ENCODE measurements at regions of chr1 and their contacts with region 1.

Region 1: DNA sequence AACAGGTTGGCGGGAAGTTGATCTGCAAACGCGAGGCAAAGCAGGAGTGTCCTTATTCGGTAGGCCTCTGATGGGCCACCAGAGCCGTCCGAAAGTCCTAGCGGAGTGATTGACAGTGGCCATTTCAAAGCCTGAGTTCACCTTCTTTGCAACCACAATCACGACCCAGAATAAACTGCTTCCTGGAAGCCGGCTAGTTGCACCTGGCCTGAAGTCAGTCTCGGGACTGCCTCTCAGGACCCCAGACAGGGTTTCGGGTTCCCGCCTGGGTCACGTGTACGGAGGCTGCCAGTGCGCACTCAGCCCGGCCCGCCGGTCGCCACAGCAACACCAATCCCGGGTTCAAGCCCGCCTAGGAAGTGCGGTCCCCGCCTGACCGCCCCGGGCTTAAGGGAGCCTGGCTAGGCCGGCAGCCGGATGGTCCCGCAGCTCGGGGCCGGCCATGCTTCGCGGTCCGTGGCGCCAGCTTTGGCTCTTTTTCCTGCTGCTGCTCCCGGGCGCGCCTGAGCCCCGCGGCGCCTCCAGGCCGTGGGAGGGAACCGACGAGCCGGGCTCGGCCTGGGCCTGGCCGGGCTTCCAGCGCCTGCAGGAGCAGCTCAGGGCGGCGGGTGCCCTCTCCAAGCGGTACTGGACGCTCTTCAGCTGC is at the start of gene TOR3A:
- DNase-seq: peak; percentile 87
- ATAC-seq: peak; percentile 82
- H3K4me3 Mint-ChIP-seq: peak within 1 kb of the TSS; percentile 97
- H3K27ac Mint-ChIP-seq: peak within 1 kb of the TSS; percentile 94
- H3K4me1 Mint-ChIP-seq: peaks cover 24% of the 10 kb centered on the region
- H3K27me3 Mint-ChIP-seq: no peaks in the 10 kb centered on the region
- total RNA-seq, gene TOR3A: 41.5 to 45.1 TPM

Region 2: GRCh38 chr1:179293340-179294327 is 211.8 kb after region 1 on chr1 and contains the start of gene SOAT1:
- POLR2A ChIA-PET with region 1: interaction called, 10 read pairs
- DNase-seq: peak; percentile 97
- ATAC-seq: peak; percentile 98
- H3K4me3 Mint-ChIP-seq: peak within 1 kb of the TSS; percentile 100
- H3K27ac Mint-ChIP-seq: peak within 1 kb of the TSS; percentile 97
- H3K4me1 Mint-ChIP-seq: peaks cover 38% of the 10 kb centered on the region
- H3K27me3 Mint-ChIP-seq: no peaks in the 10 kb centered on the region
- total RNA-seq, gene SOAT1: 58.3 to 62.8 TPM

Region 3: GRCh38 chr1:179365320-179366092 is 283.7 kb after region 1 on chr1 and contains the start of gene AXDND1:
- POLR2A ChIA-PET with region 1: interaction called, 12 read pairs
- DNase-seq: peak; percentile 86
- ATAC-seq: peak; percentile 93
- H3K4me3 Mint-ChIP-seq: peak within 1 kb of the TSS; percentile 86
- H3K27ac Mint-ChIP-seq: peak within 1 kb of the TSS; percentile 99
- H3K4me1 Mint-ChIP-seq: peaks cover 8% of the 10 kb centered on the region
- H3K27me3 Mint-ChIP-seq: no peaks in the 10 kb centered on the region
- total RNA-seq, gene AXDND1: 0.64 to 0.85 TPM

Measured in activated naive CD8-positive, alpha-beta T cell treated with anti-CD3 and anti-CD28 coated beads, Interleukin-2, amount 10 ng/mL, durations not matched to agents 7 days and 5 days (primary cell).